Calu3 (cell line): ENCODE measurements at regions of chr10 and their contacts with region 1.

Region 1: GRCh38 chr10:24383681-24384106 is 174.8 kb downstream of the KIAA1217 start:
- DNase-seq: peak; percentile 95
- H3K4me3 Mint-ChIP-seq: peak overlapping the region; percentile 60
- H3K27ac Mint-ChIP-seq: peak overlapping the region; percentile 96
- H3K4me1 Mint-ChIP-seq: peaks cover 28% of the 10 kb centered on the region
- H3K27me3 Mint-ChIP-seq: no peaks in the 10 kb centered on the region
- CTCF ChIP-seq: peak; percentile 52

Region 2: DNA sequence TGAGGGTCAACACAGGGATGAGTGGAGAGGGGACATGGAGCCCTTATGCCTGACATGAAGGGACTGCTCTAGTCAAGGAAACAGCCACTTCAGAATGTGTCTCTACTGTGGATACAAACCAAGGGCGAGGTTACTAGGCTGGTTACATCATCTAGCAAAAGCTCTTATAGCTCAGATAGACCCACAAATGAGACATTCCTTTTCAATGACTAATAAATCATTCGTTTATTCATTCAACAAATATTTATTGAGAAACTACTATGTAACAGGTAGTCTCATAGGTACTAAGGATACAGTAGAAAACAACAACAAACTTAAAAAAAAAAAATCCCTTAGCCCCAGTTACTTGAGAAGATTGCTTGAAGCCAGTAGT is 44.7 kb after region 1 on chr10:
- CTCF ChIA-PET with region 1: no interaction called
- intact Hi-C with region 1: loop called (anchors 5 kb)
- DNase-seq: peak; percentile 21
- H3K4me3 Mint-ChIP-seq: no peak overlapping the region
- H3K27ac Mint-ChIP-seq: no peak overlapping the region
- H3K4me1 Mint-ChIP-seq: peaks cover 29% of the 10 kb centered on the region
- H3K27me3 Mint-ChIP-seq: no peaks in the 10 kb centered on the region
- CTCF ChIP-seq: no peak

Region 3: GRCh38 chr10:24503461-24504320 is 120.0 kb after region 1 on chr10:
- CTCF ChIA-PET with region 1: interaction called, 5 read pairs
- intact Hi-C with region 1: loop called (anchors 5 kb)
- DNase-seq: peak; percentile 62
- H3K4me3 Mint-ChIP-seq: no peak overlapping the region
- H3K27ac Mint-ChIP-seq: no peak overlapping the region
- H3K4me1 Mint-ChIP-seq: no peaks in the 10 kb centered on the region
- H3K27me3 Mint-ChIP-seq: no peaks in the 10 kb centered on the region
- CTCF ChIP-seq: peak; percentile 75